Natural killer cell (primary cell): ENCODE measurements at regions of chr11 and their contacts with region 1.

Region 1: GRCh38 chr11:18243783-18244362 is 4.6 kb downstream of the SAA2 start:
- DNase-seq: peak; percentile 40 to 85
- ATAC-seq: peak; percentile 58 to 80 (median 76)
- H3K4me3 ChIP-seq: no peak overlapping the region
- H3K4me3 Mint-ChIP-seq: no peak overlapping the region
- H3K27ac ChIP-seq: no peak overlapping the region
- H3K27ac Mint-ChIP-seq: no peak overlapping the region
- H3K4me1 ChIP-seq: no peaks in the 10 kb centered on the region
- H3K4me1 Mint-ChIP-seq: no peaks in the 10 kb centered on the region
- H3K27me3 ChIP-seq: peaks cover 7% of the 10 kb centered on the region
- H3K27me3 Mint-ChIP-seq: peaks cover 22 to 33% of the 10 kb centered on the region in 2 donors
- CTCF ChIP-seq: peak; percentile 90

Region 2: DNA sequence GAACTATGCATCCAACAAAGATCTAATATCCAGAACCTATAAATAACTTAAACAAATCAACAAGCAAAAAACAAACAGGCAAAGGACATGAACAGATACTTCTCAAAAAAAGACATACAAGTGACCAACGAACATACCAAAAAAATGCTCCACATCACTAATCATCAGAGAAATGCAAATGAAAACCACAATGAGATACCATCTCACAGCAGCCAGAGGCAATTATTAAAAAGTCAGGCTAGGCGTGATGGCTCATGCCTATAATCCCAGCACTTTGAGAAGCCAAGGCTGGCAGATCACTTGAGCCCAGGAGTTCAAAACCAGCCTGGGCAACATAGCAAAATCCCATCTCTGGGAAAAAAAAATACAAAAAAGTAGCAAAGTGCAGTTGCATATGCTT is 18.0 kb before region 1 on chr11:
- intact Hi-C with region 1: no loop called
- DNase-seq: no peak
- ATAC-seq: no peak
- H3K4me3 ChIP-seq: no peak overlapping the region
- H3K4me3 Mint-ChIP-seq: no peak overlapping the region
- H3K27ac ChIP-seq: no peak overlapping the region
- H3K27ac Mint-ChIP-seq: no peak overlapping the region
- H3K4me1 ChIP-seq: no peaks in the 10 kb centered on the region
- H3K4me1 Mint-ChIP-seq: no peaks in the 10 kb centered on the region
- H3K27me3 ChIP-seq: no peaks in the 10 kb centered on the region
- H3K27me3 Mint-ChIP-seq: peaks cover 9 to 18% of the 10 kb centered on the region in 2 donors
- CTCF ChIP-seq: no peak

Region 3: DNA sequence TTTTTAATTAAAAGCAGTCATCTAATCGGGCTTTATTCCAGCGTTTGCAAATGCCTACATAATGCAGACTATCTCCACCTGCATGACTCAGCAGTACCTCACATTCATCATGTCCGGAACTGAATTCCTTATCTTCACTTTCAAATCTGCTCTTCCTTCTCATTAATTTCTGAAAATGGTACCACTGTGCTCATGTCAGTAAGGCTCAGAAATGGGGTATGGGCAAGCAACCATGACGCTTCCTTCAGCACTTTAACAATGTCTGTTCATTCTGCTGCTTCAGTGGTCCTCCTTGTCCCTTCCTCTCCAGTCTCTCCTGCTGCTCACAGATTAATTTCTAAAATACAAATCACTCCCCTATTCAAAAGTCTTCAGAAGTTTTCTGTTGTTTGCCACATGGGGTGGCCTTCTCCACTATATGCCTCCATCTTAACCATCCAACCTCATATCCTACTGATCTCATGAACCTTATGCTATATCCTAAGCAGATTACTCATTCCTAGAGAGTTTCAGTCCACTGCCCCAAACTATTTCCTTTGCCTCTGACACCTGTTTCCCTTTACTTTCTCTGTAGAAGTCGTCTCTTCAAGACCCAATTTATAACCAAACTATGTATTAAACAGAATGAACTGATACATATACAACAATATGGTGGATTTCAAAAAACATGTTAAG is 85.5 kb after region 1 on chr11:
- intact Hi-C with region 1: no loop called
- DNase-seq: no peak
- ATAC-seq: no peak
- H3K4me3 ChIP-seq: no peak overlapping the region
- H3K4me3 Mint-ChIP-seq: no peak overlapping the region
- H3K27ac ChIP-seq: no peak overlapping the region
- H3K27ac Mint-ChIP-seq: peak overlapping the region; percentile 2 to 55
- H3K4me1 ChIP-seq: peaks cover 17% of the 10 kb centered on the region
- H3K4me1 Mint-ChIP-seq: peaks cover 44 to 46% of the 10 kb centered on the region in 2 donors
- H3K27me3 ChIP-seq: no peaks in the 10 kb centered on the region
- H3K27me3 Mint-ChIP-seq: no peaks in the 10 kb centered on the region
- CTCF ChIP-seq: no peak

Region 4: DNA sequence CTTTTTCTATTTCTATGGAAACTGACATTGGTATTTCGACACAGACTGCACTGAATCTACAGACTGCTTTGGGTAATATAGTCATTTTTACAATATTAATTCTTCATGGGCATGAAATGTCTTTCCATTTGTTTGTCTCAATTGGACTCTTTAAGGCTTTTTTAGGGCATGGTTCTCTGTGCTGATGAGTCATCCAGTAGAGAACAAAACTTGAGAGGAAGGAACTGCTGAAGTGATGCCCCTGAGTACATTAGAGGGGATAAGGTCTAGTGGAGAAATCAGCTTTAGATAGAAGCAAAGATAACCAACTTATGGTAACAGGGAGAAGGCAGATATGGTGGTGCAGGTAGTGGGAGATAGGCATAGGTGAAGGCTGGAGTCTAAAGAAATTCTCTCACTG is 257.8 kb after region 1 on chr11:
- intact Hi-C with region 1: loop called (anchors 10 kb)
- DNase-seq: no peak
- ATAC-seq: no peak
- H3K4me3 ChIP-seq: no peak overlapping the region
- H3K4me3 Mint-ChIP-seq: no peak overlapping the region
- H3K27ac ChIP-seq: no peak overlapping the region
- H3K27ac Mint-ChIP-seq: peak overlapping the region in 1 of 2 donors; percentile 1
- H3K4me1 ChIP-seq: no peaks in the 10 kb centered on the region
- H3K4me1 Mint-ChIP-seq: no peaks in the 10 kb centered on the region
- H3K27me3 ChIP-seq: no peaks in the 10 kb centered on the region
- H3K27me3 Mint-ChIP-seq: no peaks in the 10 kb centered on the region
- CTCF ChIP-seq: no peak